ENCODE measurements at regions of chr15 and their contacts with region 1.

Region 1: DNA sequence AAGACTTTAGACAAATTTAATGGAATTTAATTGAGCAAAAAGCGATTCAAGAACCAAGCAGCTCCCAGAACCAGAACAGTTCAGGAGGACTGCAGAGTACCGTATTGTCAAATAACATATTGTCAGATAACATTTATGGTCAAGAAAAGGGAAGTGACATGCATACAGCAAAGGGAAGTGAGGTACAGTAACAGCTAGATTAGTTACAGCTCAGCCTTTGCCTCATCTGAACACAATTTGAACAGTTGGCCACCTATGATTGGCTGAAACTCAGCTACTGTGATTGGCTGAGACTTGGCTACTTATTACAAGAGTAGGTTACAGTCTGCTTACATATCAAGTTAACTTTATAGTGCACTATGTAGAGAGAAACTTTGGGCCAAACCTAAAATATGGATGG is 21.9 kb downstream of the ZFAND6 start:
- DNase-seq: no peak
- ATAC-seq: peak in 2 of 4 donors; percentile 42 to 64
- H3K4me3 ChIP-seq: no peak overlapping the region
- H3K27ac ChIP-seq: peak overlapping the region in 1 of 12 donors; percentile 42
- H3K4me1 ChIP-seq: peaks cover 0 to 22% (median 9%) of the 10 kb centered on the region in 12 donors
- H3K27me3 ChIP-seq: no peaks in the 10 kb centered on the region
- CTCF ChIP-seq: no peak
- POLR2A ChIP-seq: no peak

Region 2: DNA sequence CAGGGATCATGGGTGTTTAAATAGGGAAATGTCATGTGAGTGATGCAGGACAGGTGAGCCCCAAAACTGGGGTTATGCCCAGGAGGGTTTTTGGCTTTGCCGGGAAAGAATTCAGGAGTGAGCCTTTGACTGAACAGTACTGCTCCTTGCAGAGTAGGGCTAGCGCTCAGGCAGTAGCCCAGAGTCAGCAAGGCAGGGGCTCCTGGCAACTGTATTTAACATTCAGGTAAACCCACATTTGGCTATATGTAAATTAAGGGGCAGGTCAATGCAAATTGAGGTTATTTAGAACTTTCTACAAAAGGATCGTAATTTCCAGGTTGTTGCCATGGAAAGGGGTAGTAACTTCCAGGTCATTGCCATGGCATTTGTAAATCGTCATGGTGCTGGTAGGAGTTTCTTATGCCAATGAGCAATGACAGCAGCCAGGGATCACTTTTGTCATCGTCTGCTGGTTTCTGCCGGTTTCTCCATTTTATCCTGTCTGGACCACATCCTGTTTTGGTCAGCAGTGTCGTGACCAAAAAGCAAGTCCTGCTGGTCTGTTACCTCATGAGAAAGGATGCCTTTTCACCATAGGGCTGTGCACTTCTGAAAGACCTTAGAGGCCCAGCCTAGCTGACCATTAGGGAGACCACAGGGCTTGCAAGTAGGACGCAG is 208.9 kb before region 1 on chr15:
- intact Hi-C with region 1: no loop called
- DNase-seq: no peak
- ATAC-seq: no peak
- H3K4me3 ChIP-seq: no peak overlapping the region
- H3K27ac ChIP-seq: no peak overlapping the region
- H3K4me1 ChIP-seq: peaks cover 0 to 5% (median 0%) of the 10 kb centered on the region in 12 donors
- H3K27me3 ChIP-seq: no peaks in the 10 kb centered on the region
- CTCF ChIP-seq: no peak
- POLR2A ChIP-seq: no peak

Region 3: DNA sequence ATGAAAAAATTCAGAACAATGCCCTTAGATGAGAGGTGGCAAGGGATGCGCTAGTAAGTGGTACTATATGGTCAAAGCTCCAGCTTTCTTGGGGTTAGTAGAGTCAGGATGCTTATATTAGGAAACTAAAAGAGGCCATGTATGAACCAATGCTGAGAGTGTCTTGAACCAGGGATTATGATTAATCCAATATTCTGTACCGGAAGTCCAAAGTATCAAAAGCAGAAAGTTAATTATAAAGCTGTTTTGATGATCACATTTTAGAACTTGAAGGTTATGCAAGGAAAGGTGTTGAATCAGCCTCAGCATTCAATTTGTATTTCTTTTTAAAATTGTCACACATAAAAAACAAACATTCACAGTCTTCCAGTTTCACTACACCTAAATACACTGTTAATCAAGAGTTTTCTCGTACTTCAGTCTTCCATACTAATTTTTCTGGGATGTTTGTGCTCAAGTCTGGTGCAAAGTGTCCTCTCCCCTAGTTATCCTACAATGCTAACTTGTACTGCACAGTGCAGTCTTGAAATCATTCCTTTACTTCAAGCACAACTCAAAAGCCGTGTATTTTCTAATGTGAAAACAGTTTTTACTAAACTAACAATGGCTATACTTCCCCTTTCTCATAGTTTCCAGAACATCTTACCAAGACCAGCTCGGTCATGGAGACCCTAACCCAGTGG is 60.7 kb after region 1 on chr15:
- intact Hi-C with region 1: loop called in 1 of 10 experiments (anchors 10 kb)
- DNase-seq: no peak
- ATAC-seq: no peak
- H3K4me3 ChIP-seq: no peak overlapping the region
- H3K27ac ChIP-seq: no peak overlapping the region
- H3K4me1 ChIP-seq: peaks cover 0 to 3% (median 0%) of the 10 kb centered on the region in 12 donors
- H3K27me3 ChIP-seq: no peaks in the 10 kb centered on the region
- CTCF ChIP-seq: no peak
- POLR2A ChIP-seq: no peak

Measured in heart left ventricle (tissue), 16 donors.